GM10248 (cell line): ENCODE measurements at regions of chr9 and their contacts with region 1.

Region 1: DNA sequence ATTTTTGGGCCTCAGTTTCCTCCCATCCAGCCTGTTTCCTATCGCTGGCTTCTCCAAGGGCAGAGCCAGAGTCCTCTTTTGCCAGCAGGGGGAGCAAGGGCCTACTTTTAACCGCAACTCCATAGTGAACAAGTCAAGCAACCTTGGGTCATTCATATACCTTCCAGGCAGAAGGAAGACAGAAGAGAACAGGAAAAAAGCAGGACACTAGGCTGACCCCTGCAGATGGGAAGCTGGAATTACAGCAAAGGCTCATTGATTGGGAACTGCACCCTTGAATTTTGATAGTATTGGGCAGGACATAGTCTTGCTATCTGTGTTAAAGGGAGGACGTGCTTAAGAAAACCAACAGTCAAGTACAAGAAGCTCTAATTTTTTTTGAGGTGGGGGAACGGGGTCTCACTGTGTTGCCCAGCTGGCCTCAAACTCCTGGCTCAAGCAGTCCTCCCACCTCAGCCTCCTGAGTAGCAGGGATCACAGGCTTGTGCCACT is 30.1 kb downstream of the QRFP start:
- DNase-seq: peak; percentile 43
- CTCF ChIP-seq: peak; percentile 63

Region 2: DNA sequence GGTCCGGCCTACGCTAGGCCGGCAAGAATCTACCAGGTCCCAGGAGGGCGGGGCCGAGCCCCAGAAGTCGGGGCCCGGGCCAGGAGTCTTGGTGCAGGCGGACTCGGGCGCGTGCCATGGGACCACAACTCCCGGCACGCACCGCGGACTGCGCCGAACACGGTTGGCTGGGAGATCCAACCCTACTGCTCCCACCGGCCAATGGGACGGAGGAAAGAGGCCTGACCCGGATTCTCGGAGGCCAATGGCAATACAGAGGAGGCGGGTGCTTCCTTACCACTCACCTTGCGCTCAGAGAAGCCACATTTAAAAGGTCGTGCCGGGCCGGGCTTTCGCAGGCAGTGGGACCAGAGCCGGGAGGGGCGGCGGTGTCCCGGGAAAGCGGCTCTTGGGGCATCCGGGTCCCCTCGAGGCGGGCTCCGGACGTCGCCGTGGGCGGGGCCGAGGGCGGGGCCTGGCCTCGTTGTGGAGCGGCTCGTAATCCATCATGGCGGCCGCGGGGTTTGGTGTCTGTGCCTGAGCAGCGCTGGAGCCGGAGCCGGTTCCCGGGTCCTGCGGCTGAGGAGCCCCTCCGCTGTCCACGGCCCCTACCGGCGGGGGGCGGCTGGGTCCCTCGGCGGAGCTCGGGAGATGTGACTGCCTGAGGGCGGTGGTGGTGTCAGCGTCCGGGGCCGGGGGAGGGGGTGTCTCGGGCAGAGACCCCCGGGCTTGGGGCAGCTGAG is 153.8 kb before region 1 on chr9:
- CTCF ChIA-PET with region 1: interaction called, 318 read pairs
- POLR2A ChIA-PET with region 1: no interaction called
- DNase-seq: peak; percentile 98
- CTCF ChIP-seq: no peak

Region 3: GRCh38 chr9:130770679-130771442 is 95.7 kb before region 1 on chr9:
- CTCF ChIA-PET with region 1: interaction called, 145 read pairs
- POLR2A ChIA-PET with region 1: no interaction called
- DNase-seq: peak; percentile 50
- CTCF ChIP-seq: peak; percentile 55

Region 4: GRCh38 chr9:130839132-130840111 is 27.1 kb before region 1 on chr9:
- CTCF ChIA-PET with region 1: interaction called, 10 read pairs
- POLR2A ChIA-PET with region 1: no interaction called
- DNase-seq: no peak
- CTCF ChIP-seq: no peak

Region 5: GRCh38 chr9:130891688-130892476 is 25.4 kb after region 1 on chr9:
- CTCF ChIA-PET with region 1: interaction called, 11 read pairs
- POLR2A ChIA-PET with region 1: no interaction called
- DNase-seq: no peak
- CTCF ChIP-seq: no peak

Region 6: DNA sequence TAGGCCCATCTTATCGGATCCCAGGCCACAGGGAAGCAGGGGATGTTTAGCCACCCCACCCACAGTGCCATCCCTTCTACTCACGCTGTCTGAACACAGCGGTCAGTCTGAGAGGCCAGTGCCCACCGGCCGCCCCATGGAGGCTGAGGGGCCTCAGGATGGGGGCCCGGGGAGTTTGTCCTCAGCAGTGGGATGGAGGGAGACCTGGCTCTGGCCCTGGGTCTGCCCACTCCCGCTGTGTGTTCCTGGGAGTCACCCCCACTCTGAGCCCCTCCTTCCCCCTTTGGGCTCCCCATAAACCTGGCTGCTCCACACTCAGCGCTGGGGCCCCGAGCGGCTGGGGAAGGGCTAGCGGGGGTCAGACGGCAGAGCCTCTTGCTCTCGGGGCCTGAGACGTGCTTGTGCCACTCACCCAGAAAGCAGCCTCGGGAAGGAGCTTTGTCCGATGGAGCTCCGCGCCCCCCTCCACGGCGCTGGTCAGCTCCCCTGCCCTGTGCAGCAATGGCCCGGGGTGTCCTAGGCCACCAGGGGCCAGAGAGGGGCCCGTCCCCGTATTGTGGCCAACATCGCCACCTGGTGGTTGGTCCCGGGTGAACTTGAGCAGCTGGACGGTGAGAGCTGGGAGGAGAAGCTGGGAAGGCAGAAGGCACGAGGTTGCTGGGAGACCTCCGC is 131.5 kb after region 1 on chr9:
- CTCF ChIA-PET with region 1: interaction called, 13 read pairs
- POLR2A ChIA-PET with region 1: no interaction called
- DNase-seq: peak; percentile 81
- CTCF ChIP-seq: peak; percentile 45